ENCODE measurements at regions of chr14 and their contacts with region 1.

Region 1: DNA sequence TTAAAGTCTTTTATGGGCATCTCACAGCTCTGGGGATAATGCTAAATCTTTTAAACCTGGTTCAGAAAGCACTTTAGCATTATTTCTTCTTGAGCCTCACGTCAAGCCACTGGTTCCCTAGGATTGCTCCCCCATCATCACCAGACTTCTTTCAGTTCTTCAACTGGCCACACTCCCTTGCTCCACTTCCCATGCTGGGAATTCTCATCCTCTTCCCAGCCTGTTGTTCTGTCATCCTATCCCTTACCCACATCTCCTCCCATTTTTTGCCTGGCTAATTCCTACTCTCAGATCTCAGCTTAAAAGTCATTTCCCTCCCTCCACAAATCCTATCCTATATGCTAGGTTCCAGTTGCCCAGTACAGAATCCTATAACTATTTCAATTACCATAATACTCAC is 14.4 kb downstream of the FERMT2 start:
- DNase-seq: no peak
- ATAC-seq: no peak
- H3K4me3 ChIP-seq: no peak overlapping the region
- H3K27ac ChIP-seq: no peak overlapping the region
- H3K4me1 ChIP-seq: no peaks in the 10 kb centered on the region
- H3K27me3 ChIP-seq: no peaks in the 10 kb centered on the region
- CTCF ChIP-seq: no peak
- POLR2A ChIP-seq: no peak
- RAD21 ChIP-seq: no peak

Region 2: GRCh38 chr14:52068615-52069303 is 867.7 kb before region 1 on chr14 and contains the start of gene NID2:
- CTCF ChIA-PET with region 1: no interaction called
- POLR2A ChIA-PET with region 1: no interaction called
- RAD21 ChIA-PET with region 1: no interaction called
- intact Hi-C with region 1: loop called (anchors 5 kb)
- DNase-seq: no peak
- ATAC-seq: peak; percentile 47; the same call in 1 of the 2 replicates
- H3K4me3 ChIP-seq: no peak within 1 kb of the TSS
- H3K27ac ChIP-seq: no peak within 1 kb of the TSS
- H3K4me1 ChIP-seq: no peaks in the 10 kb centered on the region
- H3K27me3 ChIP-seq: peaks cover 4% of the 10 kb centered on the region; the same call in 1 of the 2 replicates
- CTCF ChIP-seq: no peak
- POLR2A ChIP-seq: no peak
- RAD21 ChIP-seq: no peak
- total RNA-seq, gene NID2: 0.84 TPM

Region 3: DNA sequence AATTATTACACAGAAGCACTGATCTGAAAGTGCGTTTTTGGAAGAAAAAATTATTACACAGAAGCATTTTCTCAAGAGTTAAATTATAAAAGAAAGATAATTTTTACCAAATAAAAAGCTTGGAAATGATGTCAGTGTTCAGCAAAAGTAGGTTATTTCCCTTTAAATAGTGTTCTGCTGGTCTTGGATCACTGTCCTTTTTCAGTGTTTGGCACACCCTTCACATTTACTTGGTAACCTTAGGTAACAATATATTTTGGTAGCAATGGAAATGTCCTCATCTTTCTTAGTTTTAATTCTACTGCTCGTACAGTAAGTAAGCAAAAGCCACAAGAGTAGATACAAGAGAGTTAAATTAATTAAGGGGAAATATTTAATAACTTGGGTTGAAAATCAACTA is 25.9 kb before region 1 on chr14:
- CTCF ChIA-PET with region 1: no interaction called
- POLR2A ChIA-PET with region 1: no interaction called
- RAD21 ChIA-PET with region 1: no interaction called
- intact Hi-C with region 1: no loop called
- DNase-seq: no peak
- ATAC-seq: no peak
- H3K4me3 ChIP-seq: no peak overlapping the region
- H3K27ac ChIP-seq: no peak overlapping the region
- H3K4me1 ChIP-seq: peaks cover 16 to 28% of the 10 kb centered on the region in 2 experiments
- H3K27me3 ChIP-seq: no peaks in the 10 kb centered on the region
- CTCF ChIP-seq: no peak
- POLR2A ChIP-seq: no peak
- RAD21 ChIP-seq: no peak

Measured in HCT116 (cell line).